Mammary epithelial cell (primary cell): ENCODE measurements at regions of chr14 and their contacts with region 1.

Region 1: GRCh38 chr14:70622111-70622712 is 19.5 kb upstream of the TTC9 start:
- DNase-seq: peak; percentile 52
- H3K4me3 ChIP-seq: no peak overlapping the region
- H3K27ac ChIP-seq: no peak overlapping the region
- H3K4me1 ChIP-seq: peaks cover 7% of the 10 kb centered on the region
- H3K27me3 ChIP-seq: no peaks in the 10 kb centered on the region
- CTCF ChIP-seq: peak; percentile 92 to 95

Region 2: DNA sequence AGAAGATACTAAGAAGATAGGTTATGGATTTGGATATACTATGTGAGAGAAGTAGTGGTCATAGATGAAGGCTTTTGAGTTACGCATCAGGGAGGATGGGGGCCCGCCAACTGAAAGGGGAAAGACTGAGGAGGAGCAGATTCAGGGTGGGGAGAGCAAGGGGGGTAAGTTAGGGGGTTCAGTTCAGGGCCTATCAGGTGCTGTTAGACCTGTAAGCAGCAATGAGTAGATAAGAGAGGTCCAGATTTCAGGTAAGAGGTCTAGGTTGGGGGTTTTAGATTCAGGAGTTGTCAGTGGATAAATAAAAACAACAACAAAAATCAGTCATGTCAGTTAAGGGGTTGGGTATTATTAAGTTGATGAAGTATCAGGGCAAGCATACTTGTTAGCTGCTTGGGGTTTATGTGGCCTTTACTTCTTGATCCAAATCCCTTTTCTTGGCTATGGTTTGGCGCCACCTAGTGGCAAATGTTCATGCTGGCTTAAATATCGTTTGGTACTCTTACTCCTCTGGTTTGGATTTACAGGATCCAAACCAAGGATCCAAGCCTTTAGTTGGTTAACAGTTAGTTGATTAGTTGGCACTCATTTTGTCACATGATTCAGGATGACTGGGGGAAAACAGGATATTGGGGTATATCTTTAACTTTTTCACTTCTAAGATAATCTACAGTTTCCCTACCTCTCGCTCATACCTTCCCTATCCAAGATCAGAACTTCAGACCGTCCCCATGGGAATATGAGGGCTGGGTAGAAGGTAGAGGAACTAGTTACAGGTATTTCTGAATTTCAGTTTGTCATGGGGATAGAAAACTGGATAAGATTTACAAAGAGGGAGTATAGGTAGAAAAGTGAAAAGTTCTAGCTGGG is 350.1 kb after region 1 on chr14:
- CTCF ChIA-PET with region 1: no interaction called
- dilution Hi-C with region 1: no loop called
- in situ Hi-C with region 1: loop called in 1 of 2 experiments (anchors 25 kb)
- intact Hi-C with region 1: loop called (anchors 1 kb)
- DNase-seq: peak; percentile 70
- H3K4me3 ChIP-seq: no peak overlapping the region
- H3K27ac ChIP-seq: no peak overlapping the region
- H3K4me1 ChIP-seq: no peaks in the 10 kb centered on the region
- H3K27me3 ChIP-seq: no peaks in the 10 kb centered on the region
- CTCF ChIP-seq: peak; percentile 85 to 92